ENCODE measurements at regions of chr14 and their contacts with region 1.

Region 1: GRCh38 chr14:24241829-24242443 is 487 bp downstream of the TINF2 start:
- DNase-seq: no peak
- ATAC-seq: peak; percentile 90
- H3K4me3 ChIP-seq: peak overlapping the region; percentile 80
- H3K27ac ChIP-seq: peak overlapping the region; percentile 99
- H3K4me1 ChIP-seq: peaks cover 16% of the 10 kb centered on the region
- H3K27me3 ChIP-seq: no peaks in the 10 kb centered on the region
- CTCF ChIP-seq: peak; percentile 17 to 52 (median 19); a peak in 3 of 6 replicates
- EP300 ChIP-seq: no peak
- POLR2A ChIP-seq: no peak
- RAD21 ChIP-seq: no peak

Region 2: DNA sequence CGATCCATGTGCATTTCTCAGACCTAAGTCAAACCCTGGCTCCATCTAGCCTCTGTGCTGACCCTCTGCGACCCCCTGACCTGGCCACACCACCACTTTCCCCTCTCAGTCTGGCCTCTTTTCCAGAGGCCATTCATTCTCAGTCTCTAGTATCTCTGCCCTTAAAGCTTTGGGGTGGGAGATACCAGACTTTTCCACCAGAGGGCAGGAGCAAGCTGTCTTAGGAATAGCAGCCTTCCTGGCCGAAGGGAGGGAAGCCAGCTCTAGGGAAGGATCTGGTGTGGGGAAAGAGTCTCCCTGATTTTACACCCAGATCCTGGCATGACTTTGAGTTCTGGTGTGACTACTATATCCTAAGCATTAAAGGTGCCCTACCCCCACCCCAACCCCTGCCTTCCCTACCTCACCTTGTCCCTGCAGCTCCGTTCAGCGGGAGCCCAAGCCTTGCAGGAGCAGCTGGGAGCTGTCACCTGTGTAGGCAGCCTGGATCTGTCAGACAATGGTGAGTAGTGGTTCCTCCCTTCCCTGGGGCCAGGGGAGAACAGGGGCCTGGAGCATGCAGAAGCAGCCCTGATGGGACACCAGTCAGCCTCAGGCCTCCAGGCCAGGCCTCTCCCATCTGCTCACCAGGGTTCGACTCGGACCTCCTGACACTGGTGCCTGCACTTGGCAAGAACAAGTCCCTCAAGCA is 183.5 kb before region 1 on chr14:
- CTCF ChIA-PET with region 1: interaction called, 6 read pairs
- POLR2A ChIA-PET with region 1: no interaction called
- RAD21 ChIA-PET with region 1: interaction called, 11 read pairs
- SMC1A ChIA-PET with region 1: no interaction called
- in situ Hi-C with region 1: no loop called
- intact Hi-C with region 1: no loop called
- DNase-seq: no peak
- ATAC-seq: peak; percentile 86
- H3K4me3 ChIP-seq: no peak overlapping the region
- H3K27ac ChIP-seq: no peak overlapping the region
- H3K4me1 ChIP-seq: no peaks in the 10 kb centered on the region
- H3K27me3 ChIP-seq: no peaks in the 10 kb centered on the region; a peak in 1 of 4 replicates
- CTCF ChIP-seq: peak; percentile 66 to 85 (median 80)
- EP300 ChIP-seq: no peak
- POLR2A ChIP-seq: no peak
- RAD21 ChIP-seq: peak; percentile 94

Region 3: DNA sequence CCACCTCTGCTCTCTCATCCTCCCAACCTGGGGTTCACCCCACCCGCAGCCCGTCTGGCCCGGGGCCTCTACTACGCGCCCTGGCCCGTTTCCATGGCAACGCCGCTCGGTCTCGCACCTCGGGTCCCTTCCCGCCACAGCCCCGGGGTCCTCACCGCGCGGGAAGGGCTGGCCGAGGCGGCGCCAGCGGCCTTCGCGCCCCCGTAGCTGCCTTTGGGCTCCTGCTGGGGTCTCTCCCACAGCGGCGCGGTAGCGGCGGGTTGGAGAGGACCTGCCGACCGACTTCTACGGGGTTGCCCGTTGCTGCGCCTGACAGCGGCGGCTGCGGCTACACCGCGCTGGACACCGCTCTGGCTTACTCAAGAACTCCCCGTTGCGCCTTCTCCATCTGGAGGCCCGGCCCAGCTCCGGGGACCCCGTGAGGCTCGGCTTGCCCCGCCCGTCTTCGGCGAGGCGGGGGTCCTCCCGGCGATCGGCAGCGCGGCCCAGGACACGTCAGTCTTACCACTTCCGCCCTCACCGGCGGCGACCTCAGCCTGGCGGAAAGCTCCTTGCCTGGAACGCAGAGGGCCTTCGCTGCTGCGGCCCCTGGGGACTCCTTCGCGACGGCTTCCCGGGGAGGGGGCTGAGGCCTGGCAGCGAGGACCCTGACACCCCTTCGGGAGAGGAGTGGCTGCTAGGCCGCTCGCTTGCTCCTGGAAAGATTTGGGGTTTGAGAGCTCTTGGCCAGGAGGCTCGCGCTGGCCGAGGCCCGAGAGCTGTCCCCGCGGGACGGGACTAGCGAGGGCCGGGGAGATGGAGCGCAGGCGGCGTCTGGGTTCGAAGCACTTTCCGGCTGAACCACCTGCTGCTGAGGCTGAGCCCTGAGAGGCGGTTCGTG is 46.5 kb before region 1 on chr14 and contains the start of gene TM9SF1:
- CTCF ChIA-PET with region 1: interaction called, 7 read pairs
- POLR2A ChIA-PET with region 1: interaction called, 13 read pairs
- RAD21 ChIA-PET with region 1: interaction called, 8 read pairs
- SMC1A ChIA-PET with region 1: interaction called, 10 read pairs
- in situ Hi-C with region 1: no loop called
- intact Hi-C with region 1: no loop called
- DNase-seq: peak; percentile 52
- ATAC-seq: peak; percentile 93
- H3K4me3 ChIP-seq: peak within 1 kb of the TSS; percentile 68
- H3K27ac ChIP-seq: peak within 1 kb of the TSS; percentile 96
- H3K4me1 ChIP-seq: peaks cover 15% of the 10 kb centered on the region
- H3K27me3 ChIP-seq: no peaks in the 10 kb centered on the region
- CTCF ChIP-seq: no peak
- EP300 ChIP-seq: no peak
- POLR2A ChIP-seq: peak; percentile 95
- RAD21 ChIP-seq: no peak
- polyA plus RNA-seq, gene TM9SF1: 7.2 to 9.8 TPM

Region 4: DNA sequence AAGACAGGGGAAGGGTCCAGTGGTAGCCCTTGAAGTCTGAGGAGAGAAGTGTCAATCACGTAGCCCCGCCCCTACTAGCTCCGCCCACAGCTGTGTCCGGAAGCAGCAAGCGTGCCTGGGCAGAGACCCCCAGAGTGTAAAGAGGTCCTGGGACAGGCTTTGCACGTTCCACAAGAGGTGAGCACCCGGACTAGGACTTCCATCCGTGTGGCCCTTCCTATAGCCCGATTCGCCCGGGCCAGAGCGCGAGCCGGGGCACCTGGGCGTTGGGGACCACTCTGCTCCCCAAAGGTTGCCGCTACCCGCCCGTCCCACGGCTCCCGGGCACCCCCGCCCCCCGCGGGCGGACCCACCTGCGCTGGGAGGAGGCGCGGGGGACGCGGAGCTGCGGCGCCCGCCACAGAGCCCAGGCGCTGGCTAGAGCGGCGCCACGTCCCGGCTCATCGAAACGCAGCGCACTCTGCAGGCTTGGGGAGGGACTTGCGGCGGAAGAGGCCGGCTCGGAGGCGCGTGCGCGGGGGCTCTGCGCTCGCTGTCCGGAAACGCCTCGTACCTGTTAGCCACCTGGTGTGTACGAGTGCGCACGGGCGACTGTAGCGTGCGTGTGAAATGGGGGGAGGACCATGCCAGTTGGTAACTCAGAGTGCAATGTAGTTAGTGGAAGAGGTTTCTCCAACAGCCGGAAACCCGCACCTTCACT is 29.3 kb after region 1 on chr14 and contains the start of gene RABGGTA:
- CTCF ChIA-PET with region 1: interaction called, 266 read pairs
- POLR2A ChIA-PET with region 1: interaction called, 171 read pairs
- RAD21 ChIA-PET with region 1: interaction called, 59 read pairs
- SMC1A ChIA-PET with region 1: interaction called, 141 read pairs
- in situ Hi-C with region 1: no loop called
- intact Hi-C with region 1: loop called (anchors 1 kb)
- DNase-seq: peak; percentile 80
- ATAC-seq: peak; percentile 89
- H3K4me3 ChIP-seq: peak within 1 kb of the TSS; percentile 88
- H3K27ac ChIP-seq: peak within 1 kb of the TSS; percentile 99
- H3K4me1 ChIP-seq: peaks cover 25% of the 10 kb centered on the region
- H3K27me3 ChIP-seq: no peaks in the 10 kb centered on the region
- CTCF ChIP-seq: peak; percentile 84 to 93 (median 86); a peak in 5 of 6 replicates
- EP300 ChIP-seq: no peak
- POLR2A ChIP-seq: peak; percentile 93
- RAD21 ChIP-seq: 0 out of 2 replicates have a peak, but pooled peaks have one; percentile 25
- polyA plus RNA-seq, gene RABGGTA: 38.2 to 38.6 TPM

Region 5: DNA sequence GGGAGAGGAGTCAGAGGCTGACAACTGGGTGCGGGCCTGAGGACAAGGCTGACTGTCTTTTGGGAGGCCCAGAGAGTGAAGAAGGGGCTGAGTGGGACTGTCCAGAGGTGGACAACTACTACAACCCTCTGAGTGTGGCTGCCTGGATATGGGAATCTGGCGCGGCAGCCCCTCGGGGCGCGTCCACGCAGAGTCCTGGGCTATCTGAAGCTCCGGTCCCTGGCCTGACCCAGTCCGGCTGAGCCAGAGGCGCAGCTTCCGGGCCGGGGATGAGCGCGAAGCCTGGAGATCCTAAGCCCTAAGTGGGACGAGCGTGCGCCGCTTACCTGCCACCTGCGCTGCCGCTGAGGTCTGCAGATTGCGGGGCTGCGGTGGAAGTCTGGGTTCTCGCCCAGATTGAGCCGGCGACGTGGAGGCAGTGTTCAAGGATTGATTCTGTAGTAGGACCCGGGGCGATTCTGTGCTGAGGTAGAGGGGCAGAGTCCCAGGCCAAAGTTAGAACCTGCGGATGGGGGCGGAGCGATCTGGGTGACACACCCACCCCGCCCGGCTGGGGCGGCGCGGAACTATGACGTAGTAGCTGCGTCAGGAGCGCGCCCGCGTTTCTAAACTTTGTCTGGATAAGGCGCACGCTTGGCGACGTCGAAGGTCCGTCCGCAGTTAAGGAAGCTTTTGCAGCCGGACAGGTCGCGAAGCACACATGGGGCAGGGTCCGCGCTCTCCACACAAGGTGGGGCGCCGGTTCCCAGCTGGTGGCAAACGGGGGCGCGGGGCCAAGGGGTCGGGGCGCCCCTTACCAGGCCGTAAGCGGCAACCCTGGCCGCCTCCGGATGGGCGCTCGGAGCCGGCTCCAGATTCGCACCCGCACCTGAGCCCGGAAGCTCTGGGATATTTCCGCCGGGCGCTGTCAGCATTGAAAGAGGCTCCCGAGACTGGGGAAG is 57.6 kb after region 1 on chr14 and contains the starts of genes DHRS1 and NOP9:
- CTCF ChIA-PET with region 1: interaction called, 368 read pairs
- POLR2A ChIA-PET with region 1: interaction called, 118 read pairs
- RAD21 ChIA-PET with region 1: interaction called, 231 read pairs
- SMC1A ChIA-PET with region 1: interaction called, 201 read pairs
- in situ Hi-C with region 1: loop called (anchors 5 kb)
- intact Hi-C with region 1: loop called (anchors 1 kb)
- DNase-seq: peak; percentile 65
- ATAC-seq: peak; percentile 79
- H3K4me3 ChIP-seq: peak within 1 kb of the TSS; percentile 96
- H3K27ac ChIP-seq: peak within 1 kb of the TSS; percentile 51
- H3K4me1 ChIP-seq: peaks cover 25% of the 10 kb centered on the region
- H3K27me3 ChIP-seq: no peaks in the 10 kb centered on the region
- CTCF ChIP-seq: no peak
- EP300 ChIP-seq: no peak
- POLR2A ChIP-seq: peak; percentile 85
- RAD21 ChIP-seq: no peak
- polyA plus RNA-seq, gene DHRS1: 44.6 to 45.0 TPM
- polyA plus RNA-seq, gene NOP9: 2.4 to 3.4 TPM

Measured in GM12878 (cell line).